B cell (primary cell): ENCODE measurements at regions of chrX and their contacts with region 1.

Region 1: GRCh38 chrX:154097597-154098541 is at the start of gene MECP2:
- DNase-seq: peak; percentile 92
- ATAC-seq: peak; percentile 91
- H3K4me3 ChIP-seq: peak within 1 kb of the TSS; percentile 52 to 70 (median 60)
- H3K4me3 Mint-ChIP-seq: peak within 1 kb of the TSS; percentile 94
- H3K27ac ChIP-seq: peak within 1 kb of the TSS; percentile 65 to 85
- H3K27ac Mint-ChIP-seq: peak within 1 kb of the TSS; percentile 94
- H3K4me1 ChIP-seq: peaks cover 30 to 42% of the 10 kb centered on the region in 2 donors
- H3K4me1 Mint-ChIP-seq: peaks cover 38% of the 10 kb centered on the region
- H3K27me3 ChIP-seq: no peaks in the 10 kb centered on the region
- H3K27me3 Mint-ChIP-seq: peaks cover 7% of the 10 kb centered on the region
- CTCF ChIP-seq: no peak
- total RNA-seq, gene MECP2: 113 and 122 TPM in 2 replicates

Region 2: DNA sequence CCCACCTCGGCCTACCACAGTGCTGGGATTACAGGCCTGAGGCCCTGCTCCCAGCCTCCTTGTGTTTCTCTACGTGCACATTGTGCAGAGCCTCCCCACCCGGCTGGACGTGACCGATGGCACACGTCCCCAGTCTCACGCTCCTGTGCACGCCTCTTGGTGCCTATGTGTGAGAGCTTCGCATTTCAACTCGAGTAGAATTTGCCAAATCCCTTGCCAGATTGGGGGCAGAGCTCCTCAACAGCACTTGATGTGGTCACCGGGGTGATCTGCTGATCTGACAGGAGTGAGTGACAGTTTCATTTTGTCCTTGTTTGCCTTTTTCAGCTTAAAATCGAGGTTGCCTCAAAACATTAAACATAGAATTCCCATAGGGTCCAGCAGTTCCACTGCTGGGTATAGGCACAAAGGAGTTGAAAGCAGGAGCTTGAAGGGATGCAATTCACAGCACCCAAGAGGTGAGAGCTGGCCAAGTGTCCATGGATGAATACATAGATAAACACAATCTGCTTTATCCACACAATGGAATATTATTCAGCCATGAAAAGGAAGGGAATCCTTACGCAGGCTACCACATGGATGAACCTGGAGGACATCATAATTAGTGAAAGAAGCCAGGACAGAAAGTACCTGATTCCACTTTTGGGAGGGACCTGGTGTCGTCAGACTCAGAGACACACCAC is 107.8 kb before region 1 on chrX:
- CTCF ChIA-PET with region 1: no interaction called
- POLR2A ChIA-PET with region 1: no interaction called
- intact Hi-C with region 1: no loop called
- DNase-seq: no peak
- ATAC-seq: no peak
- H3K4me3 ChIP-seq: no peak overlapping the region
- H3K4me3 Mint-ChIP-seq: no peak overlapping the region
- H3K27ac ChIP-seq: no peak overlapping the region
- H3K27ac Mint-ChIP-seq: no peak overlapping the region
- H3K4me1 ChIP-seq: peaks cover 3 to 15% of the 10 kb centered on the region in 2 donors
- H3K4me1 Mint-ChIP-seq: peaks cover 5% of the 10 kb centered on the region
- H3K27me3 ChIP-seq: no peaks in the 10 kb centered on the region
- H3K27me3 Mint-ChIP-seq: no peaks in the 10 kb centered on the region
- CTCF ChIP-seq: no peak

Region 3: DNA sequence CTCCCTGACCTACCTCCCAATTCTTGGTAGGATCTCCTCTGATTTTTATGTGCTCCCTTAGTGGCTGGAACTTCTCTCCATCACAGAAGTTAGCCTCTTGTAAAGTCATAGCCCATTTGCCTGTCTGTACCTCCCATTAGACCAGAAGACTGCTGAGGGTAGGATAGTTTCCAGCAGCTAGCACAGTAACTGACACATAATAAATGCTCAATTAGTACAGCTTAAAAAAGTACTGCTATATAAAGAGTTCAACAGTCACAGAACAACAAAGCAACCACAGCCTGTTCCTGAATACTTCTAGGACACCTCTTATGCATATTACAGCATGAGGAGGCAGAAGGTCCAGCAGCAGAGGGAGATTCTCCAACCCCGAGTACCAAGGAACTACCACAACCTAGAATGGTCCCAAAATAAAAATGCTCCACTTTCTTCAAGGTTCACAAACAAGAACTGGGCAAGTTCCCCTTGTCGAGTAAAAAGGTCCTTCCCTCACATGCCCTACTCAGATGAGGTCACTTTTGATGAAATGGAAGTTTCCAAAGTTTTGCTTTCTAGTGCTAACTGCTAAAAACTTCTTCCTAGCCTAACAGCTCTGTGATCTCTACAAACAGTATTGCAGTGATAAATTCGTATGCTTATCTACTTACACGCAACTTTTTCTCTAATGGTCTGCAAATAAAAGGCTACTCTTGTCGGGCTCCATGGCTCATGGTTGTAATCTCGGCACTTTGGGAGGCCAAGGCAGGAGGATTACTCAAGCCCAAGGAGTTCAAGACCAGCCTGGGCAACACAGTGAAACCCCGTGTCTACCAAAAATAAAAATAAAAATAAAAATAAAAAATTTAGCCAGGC is 13.2 kb before region 1 on chrX:
- CTCF ChIA-PET with region 1: no interaction called
- POLR2A ChIA-PET with region 1: no interaction called
- intact Hi-C with region 1: no loop called
- DNase-seq: no peak
- ATAC-seq: no peak
- H3K4me3 ChIP-seq: no peak overlapping the region
- H3K4me3 Mint-ChIP-seq: no peak overlapping the region
- H3K27ac ChIP-seq: peak overlapping the region in 1 of 2 donors; percentile 8
- H3K27ac Mint-ChIP-seq: peak overlapping the region; percentile 32
- H3K4me1 ChIP-seq: peaks cover 4 to 8% of the 10 kb centered on the region in 2 donors
- H3K4me1 Mint-ChIP-seq: peaks cover 28% of the 10 kb centered on the region
- H3K27me3 ChIP-seq: no peaks in the 10 kb centered on the region
- H3K27me3 Mint-ChIP-seq: no peaks in the 10 kb centered on the region
- CTCF ChIP-seq: no peak

Region 4: GRCh38 chrX:154298312-154298711 is 200.4 kb after region 1 on chrX:
- CTCF ChIA-PET with region 1: no interaction called
- POLR2A ChIA-PET with region 1: no interaction called
- intact Hi-C with region 1: no loop called
- DNase-seq: peak; percentile 73
- ATAC-seq: peak; percentile 87
- H3K4me3 ChIP-seq: no peak overlapping the region
- H3K4me3 Mint-ChIP-seq: peak overlapping the region; percentile 19
- H3K27ac ChIP-seq: peak overlapping the region; percentile 47 to 67
- H3K27ac Mint-ChIP-seq: peak overlapping the region; percentile 82
- H3K4me1 ChIP-seq: peaks cover 9 to 15% of the 10 kb centered on the region in 2 donors
- H3K4me1 Mint-ChIP-seq: peaks cover 19% of the 10 kb centered on the region
- H3K27me3 ChIP-seq: no peaks in the 10 kb centered on the region
- H3K27me3 Mint-ChIP-seq: no peaks in the 10 kb centered on the region
- CTCF ChIP-seq: no peak

Region 5: DNA sequence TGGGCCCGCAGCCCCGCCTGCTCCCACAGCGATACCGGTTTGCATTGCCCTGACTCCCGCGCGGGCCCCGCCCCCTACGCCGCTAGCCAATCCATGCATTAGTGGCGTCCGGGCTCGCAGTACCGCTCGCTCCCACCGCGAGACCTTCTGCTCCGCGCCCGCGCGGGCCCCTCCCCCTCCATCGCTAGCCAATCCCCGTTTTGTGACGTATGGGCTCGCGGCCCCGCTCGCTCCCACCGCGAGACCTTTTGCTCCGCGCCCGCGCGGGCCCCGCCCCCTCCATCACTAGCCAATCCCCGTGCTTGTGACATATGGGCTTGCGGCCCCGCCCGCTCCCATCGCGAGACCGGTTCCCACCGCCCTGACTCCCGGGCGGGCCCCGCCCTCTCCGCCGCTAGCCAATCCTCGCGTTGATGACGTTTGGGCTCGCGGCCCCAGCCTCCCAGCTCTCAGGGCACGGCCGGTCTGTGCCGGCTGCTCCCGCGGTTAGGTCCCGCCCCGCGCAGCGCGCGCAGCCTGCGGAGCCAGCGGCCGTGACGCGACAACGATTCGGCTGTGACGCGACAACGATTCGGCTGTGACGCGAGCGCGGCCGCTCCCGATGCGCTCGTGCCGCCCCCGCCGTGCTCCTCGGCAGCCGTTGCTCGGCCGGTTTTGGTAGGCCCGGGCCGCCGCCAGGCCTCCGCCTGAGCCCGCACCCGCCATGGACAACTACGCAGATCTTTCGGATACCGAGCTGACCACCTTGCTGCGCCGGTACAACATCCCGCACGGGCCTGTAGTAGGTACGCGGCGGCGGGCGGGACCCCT is 281.1 kb after region 1 on chrX and contains the start of gene EMD:
- CTCF ChIA-PET with region 1: no interaction called
- POLR2A ChIA-PET with region 1: no interaction called
- intact Hi-C with region 1: loop called (anchors 10 kb)
- DNase-seq: peak; percentile 98
- ATAC-seq: peak; percentile 79
- H3K4me3 ChIP-seq: peak within 1 kb of the TSS in 4 of 5 experiments; percentile 67 to 83 (median 72)
- H3K4me3 Mint-ChIP-seq: peak within 1 kb of the TSS; percentile 86
- H3K27ac ChIP-seq: peak within 1 kb of the TSS; percentile 90 to 99
- H3K27ac Mint-ChIP-seq: peak within 1 kb of the TSS; percentile 92
- H3K4me1 ChIP-seq: peaks cover 21 to 33% of the 10 kb centered on the region in 2 donors
- H3K4me1 Mint-ChIP-seq: peaks cover 24% of the 10 kb centered on the region
- H3K27me3 ChIP-seq: no peaks in the 10 kb centered on the region
- H3K27me3 Mint-ChIP-seq: no peaks in the 10 kb centered on the region
- CTCF ChIP-seq: no peak
- total RNA-seq, gene EMD: 67.2 and 81.7 TPM in 2 replicates